ENCODE measurements at regions of chr1 and their contacts with region 1.

Region 1: GRCh38 chr1:59367301-59368007 is 70.6 kb downstream of the FGGY start:
- DNase-seq: peak; percentile 86
- H3K4me3 ChIP-seq: no peak overlapping the region
- CTCF ChIP-seq: no peak

Region 2: GRCh38 chr1:59443310-59443709 is 75.9 kb after region 1 on chr1:
- in situ Hi-C with region 1: loop called (anchors 5 kb)
- DNase-seq: no peak
- H3K4me3 ChIP-seq: no peak overlapping the region
- CTCF ChIP-seq: no peak

Measured in astrocyte of the cerebellum (primary cell).